Left ventricle myocardium superior (tissue), 1 donor: ENCODE measurements at regions of chr7 and their contacts with region 1.

Region 1: GRCh38 chr7:38215735-38216670 is 38.0 kb downstream of the STARD3NL start:
- DNase-seq: peak; percentile 77
- ATAC-seq: peak; percentile 92

Region 2: GRCh38 chr7:38179776-38180226 is 36.2 kb before region 1 on chr7:
- intact Hi-C with region 1: loop called (anchors 5 kb)
- DNase-seq: no peak
- ATAC-seq: no peak

Region 3: GRCh38 chr7:38245409-38245977 is 29.5 kb after region 1 on chr7:
- intact Hi-C with region 1: no loop called
- DNase-seq: no peak
- ATAC-seq: no peak